ENCODE measurements at regions of chr7 and their contacts with region 1.

Region 1: GRCh38 chr7:65750511-65751344 is 122.1 kb upstream of the VKORC1L1 start:
- DNase-seq: peak; percentile 95
- H3K4me3 ChIP-seq: peak overlapping the region; percentile 89
- H3K27ac ChIP-seq: peak overlapping the region; percentile 90
- H3K4me1 ChIP-seq: peaks cover 4% of the 10 kb centered on the region
- H3K27me3 ChIP-seq: no peaks in the 10 kb centered on the region
- CTCF ChIP-seq: no peak

Region 2: DNA sequence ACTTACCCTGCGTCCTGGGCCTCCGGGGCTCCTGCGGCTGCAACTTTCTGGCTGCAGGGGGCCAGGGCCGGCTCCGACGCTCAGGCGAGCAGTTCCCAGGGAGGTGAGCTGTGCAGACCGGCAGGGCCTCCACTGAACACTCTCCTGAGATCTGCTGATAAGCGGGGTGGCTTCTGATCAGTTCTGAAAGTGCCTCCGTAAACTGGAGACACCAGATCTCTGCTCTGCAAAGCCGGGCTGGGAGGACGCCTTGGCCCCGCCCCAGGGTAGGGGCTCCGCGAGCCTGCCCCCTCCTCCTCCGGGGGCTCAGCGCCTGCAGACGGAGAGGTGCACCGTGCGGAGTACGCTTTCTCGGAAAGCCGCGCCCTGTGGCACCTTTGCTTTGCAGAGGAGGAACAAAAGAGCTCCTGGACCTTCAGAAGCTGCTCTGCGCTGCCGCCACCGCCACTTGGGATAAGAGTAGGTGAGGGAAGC is 19.1 kb before region 1 on chr7:
- CTCF ChIA-PET with region 1: no interaction called
- POLR2A ChIA-PET with region 1: no interaction called
- intact Hi-C with region 1: loop called (anchors 2 kb)
- DNase-seq: peak; percentile 46
- H3K4me3 ChIP-seq: peak overlapping the region; percentile 42
- H3K27ac ChIP-seq: no peak overlapping the region
- H3K4me1 ChIP-seq: no peaks in the 10 kb centered on the region
- H3K27me3 ChIP-seq: no peaks in the 10 kb centered on the region
- CTCF ChIP-seq: no peak; the same call in 1 of the 2 replicates